ENCODE measurements at regions of chr1 and their contacts with region 1.

Region 1: DNA sequence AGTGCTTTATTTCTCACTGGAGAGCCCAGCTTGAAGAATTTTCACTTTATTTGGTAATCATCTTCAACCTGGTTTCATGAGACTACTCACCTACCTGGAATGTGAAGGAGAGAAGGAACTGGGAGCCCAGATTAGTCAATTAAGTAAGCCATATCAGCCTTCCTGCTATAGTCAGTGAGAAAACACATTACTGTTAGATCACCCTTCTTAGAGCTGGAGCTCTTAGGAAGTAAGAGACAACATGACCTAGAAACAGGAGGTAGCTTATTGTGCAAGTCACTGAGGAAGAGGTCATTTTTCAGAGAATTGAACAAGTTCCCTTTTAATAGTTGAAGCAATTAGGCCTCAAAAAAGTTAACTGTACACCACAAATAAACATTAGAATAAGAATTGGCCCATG is 49.2 kb upstream of the TEKT2 start:
- DNase-seq: peak; percentile 79
- H3K27ac ChIP-seq: no peak overlapping the region
- CTCF ChIP-seq: no peak

Region 2: DNA sequence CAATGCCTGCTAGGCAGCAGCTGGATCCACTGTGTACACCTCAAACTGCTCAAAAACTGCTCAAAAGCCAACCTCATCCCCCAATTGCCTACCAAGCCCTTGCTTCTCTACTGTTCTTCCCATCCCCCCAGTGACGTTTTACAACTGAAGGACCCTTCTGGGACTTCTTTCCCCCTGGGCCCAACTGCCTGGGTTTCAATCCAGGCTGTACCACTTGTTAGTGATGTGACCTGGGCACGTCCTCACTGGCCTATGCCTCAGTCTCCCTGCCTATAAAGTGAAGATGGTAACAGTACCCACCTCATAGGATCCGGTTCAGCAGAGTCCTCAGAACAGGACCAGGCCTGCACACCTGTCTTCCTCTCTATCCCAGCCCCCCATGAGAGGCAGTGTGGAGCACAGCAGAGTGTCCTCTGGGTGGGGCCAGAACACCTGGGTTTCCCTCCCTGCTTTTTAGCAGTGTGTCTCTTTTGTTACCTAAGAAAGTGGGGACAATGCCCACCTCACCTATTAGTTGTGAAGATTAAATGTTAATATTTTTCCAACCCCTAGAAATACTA is 47.3 kb after region 1 on chr1:
- CTCF ChIA-PET with region 1: no interaction called
- POLR2A ChIA-PET with region 1: interaction called, 10 read pairs
- DNase-seq: no peak
- H3K27ac ChIP-seq: no peak overlapping the region
- CTCF ChIP-seq: no peak